Colonic mucosa (tissue), 4 donors: ENCODE measurements at regions of chr9 and their contacts with region 1.

Region 1: DNA sequence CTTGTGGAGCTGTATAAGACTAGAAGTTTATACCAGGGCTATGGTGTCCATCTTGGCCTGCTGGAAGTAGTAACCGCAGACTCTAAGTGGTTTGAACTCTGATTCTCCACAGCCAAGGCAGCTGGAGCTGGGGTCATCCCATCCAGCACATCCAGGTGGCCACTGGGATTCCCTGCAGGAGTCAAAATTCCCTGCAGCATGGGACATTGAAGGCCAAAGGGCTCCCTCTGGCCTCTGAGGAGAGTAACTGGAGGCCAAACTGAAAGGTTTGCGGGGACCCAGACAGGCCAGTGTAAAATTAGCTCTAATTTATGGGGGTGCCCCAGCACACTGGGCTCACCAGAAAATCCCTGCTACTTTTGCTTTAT is 12.2 kb upstream of the PRXL2C start:
- DNase-seq: no peak
- H3K4me3 ChIP-seq: no peak overlapping the region
- H3K27ac ChIP-seq: no peak overlapping the region
- H3K4me1 ChIP-seq: no peaks in the 10 kb centered on the region
- H3K27me3 ChIP-seq: no peaks in the 10 kb centered on the region
- CTCF ChIP-seq: no peak

Region 2: DNA sequence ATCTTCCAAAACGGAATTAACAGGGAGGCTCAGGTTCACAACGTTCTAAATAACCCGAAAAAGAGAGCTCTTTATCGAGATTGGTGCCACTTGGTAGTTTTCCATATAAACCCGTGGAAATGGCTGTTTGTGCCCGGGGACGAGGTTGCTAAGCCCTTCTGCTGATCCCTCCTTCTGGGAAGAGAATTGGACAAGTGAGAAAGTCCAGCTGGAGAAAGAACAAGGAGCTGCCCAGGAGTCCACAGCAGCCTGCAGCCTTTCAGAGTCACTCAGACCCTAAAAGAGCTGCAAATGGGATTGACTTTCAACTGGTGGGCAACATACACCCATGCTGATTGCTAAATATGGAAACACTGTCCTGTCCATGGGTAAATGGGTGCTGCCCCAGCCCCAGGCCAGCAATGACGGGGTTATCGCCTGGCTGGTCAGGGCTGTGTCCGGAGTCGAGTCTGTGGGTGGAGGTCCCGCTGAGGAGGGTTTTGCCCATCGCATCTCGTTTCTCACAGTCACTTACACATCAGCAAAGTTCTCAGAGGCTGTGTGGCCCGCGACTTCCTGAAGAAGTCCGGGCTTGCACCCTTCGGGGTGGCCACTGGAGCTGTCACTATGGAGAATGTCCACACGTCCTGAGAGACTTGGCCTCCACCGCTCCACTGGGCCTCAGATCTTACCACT is 324.6 kb before region 1 on chr9:
- intact Hi-C with region 1: no loop called
- DNase-seq: peak; percentile 24
- H3K4me3 ChIP-seq: no peak overlapping the region
- H3K27ac ChIP-seq: peak overlapping the region; percentile 28
- H3K4me1 ChIP-seq: peaks cover 6% of the 10 kb centered on the region
- H3K27me3 ChIP-seq: no peaks in the 10 kb centered on the region
- CTCF ChIP-seq: no peak

Region 3: GRCh38 chr9:96449845-96450612 is 217.3 kb before region 1 on chr9 and contains the start of gene HABP4:
- intact Hi-C with region 1: loop called (anchors 5 kb)
- DNase-seq: peak; percentile 96
- H3K4me3 ChIP-seq: peak within 1 kb of the TSS; percentile 67
- H3K27ac ChIP-seq: no peak within 1 kb of the TSS
- H3K4me1 ChIP-seq: no peaks in the 10 kb centered on the region
- H3K27me3 ChIP-seq: no peaks in the 10 kb centered on the region
- CTCF ChIP-seq: no peak
- total RNA-seq, gene HABP4: 2.8 to 4.4 TPM